ENCODE measurements at regions of chr4 and their contacts with region 1.

Region 1: GRCh38 chr4:76179398-76180318 is 31.5 kb upstream of the NUP54 start:
- DNase-seq: peak; percentile 69 to 98 (median 90)

Region 2: GRCh38 chr4:76251441-76252270 is 72.0 kb after region 1 on chr4 and contains the start of gene FAM47E:
- intact Hi-C with region 1: loop called (anchors 5 kb)
- DNase-seq: peak; percentile 52 to 96 (median 74)

Region 3: GRCh38 chr4:76447393-76447851 is 267.8 kb after region 1 on chr4:
- intact Hi-C with region 1: no loop called
- DNase-seq: no peak

Region 4: GRCh38 chr4:76504613-76505465 is 325.2 kb after region 1 on chr4:
- intact Hi-C with region 1: loop called (anchors 10 kb)
- DNase-seq: no peak

Measured in posterior cingulate gyrus (tissue), 11 donors.